Spleen (tissue), 13 donors: ENCODE measurements at regions of chr22 and their contacts with region 1.

Region 1: GRCh38 chr22:45240810-45241631 is at the start of gene KIAA0930:
- DNase-seq: peak; percentile 96
- H3K4me3 ChIP-seq: peak within 1 kb of the TSS; percentile 54 to 91 (median 70)
- H3K27ac ChIP-seq: peak within 1 kb of the TSS; percentile 29 to 87 (median 74)
- H3K4me1 ChIP-seq: peaks cover 17 to 79% (median 47%) of the 10 kb centered on the region in 6 donors
- H3K27me3 ChIP-seq: no peaks in the 10 kb centered on the region
- CTCF ChIP-seq: no peak
- POLR2A ChIP-seq: no peak
- total RNA-seq, gene KIAA0930: 35.5 to 93.1 (median 73.7) TPM

Region 2: GRCh38 chr22:45163451-45164269 is 77.4 kb before region 1 on chr22 and contains the start of gene NUP50:
- intact Hi-C with region 1: loop called (anchors 10 kb)
- DNase-seq: peak; percentile 98
- H3K4me3 ChIP-seq: peak within 1 kb of the TSS; percentile 75 to 97 (median 88)
- H3K27ac ChIP-seq: peak within 1 kb of the TSS; percentile 87 to 97 (median 96)
- H3K4me1 ChIP-seq: peaks cover 33 to 90% (median 68%) of the 10 kb centered on the region in 6 donors
- H3K27me3 ChIP-seq: no peaks in the 10 kb centered on the region
- CTCF ChIP-seq: peak in 3 of 11 experiments; percentile 29 to 40 (median 29)
- POLR2A ChIP-seq: peak in 1 of 3 donors; percentile 63
- total RNA-seq, gene NUP50: 85.9 to 109 (median 98.5) TPM